ENCODE measurements at regions of chr17 and their contacts with region 1.

Region 1: GRCh38 chr17:67824735-67825626 is at the start of gene BPTF:
- DNase-seq: peak; percentile 98
- ATAC-seq: peak; percentile 90
- H3K4me3 ChIP-seq: peak within 1 kb of the TSS; percentile 90
- H3K27ac ChIP-seq: peak within 1 kb of the TSS; percentile 81
- H3K4me1 ChIP-seq: peaks cover 25% of the 10 kb centered on the region
- H3K27me3 ChIP-seq: no peaks in the 10 kb centered on the region
- CTCF ChIP-seq: peak; percentile 89
- total RNA-seq, gene BPTF: 53.8 and 61.8 TPM in 2 replicates

Region 2: GRCh38 chr17:67841992-67842391 is 17.0 kb after region 1 on chr17:
- CTCF ChIA-PET with region 1: no interaction called
- POLR2A ChIA-PET with region 1: no interaction called
- intact Hi-C with region 1: loop called (anchors 2 kb)
- DNase-seq: peak; percentile 3
- ATAC-seq: no peak
- H3K4me3 ChIP-seq: no peak overlapping the region
- H3K27ac ChIP-seq: no peak overlapping the region
- H3K4me1 ChIP-seq: no peaks in the 10 kb centered on the region
- H3K27me3 ChIP-seq: no peaks in the 10 kb centered on the region
- CTCF ChIP-seq: no peak

Measured in PC-3 (cell line).